ENCODE measurements at regions of chr22 and their contacts with region 1.

Region 1: DNA sequence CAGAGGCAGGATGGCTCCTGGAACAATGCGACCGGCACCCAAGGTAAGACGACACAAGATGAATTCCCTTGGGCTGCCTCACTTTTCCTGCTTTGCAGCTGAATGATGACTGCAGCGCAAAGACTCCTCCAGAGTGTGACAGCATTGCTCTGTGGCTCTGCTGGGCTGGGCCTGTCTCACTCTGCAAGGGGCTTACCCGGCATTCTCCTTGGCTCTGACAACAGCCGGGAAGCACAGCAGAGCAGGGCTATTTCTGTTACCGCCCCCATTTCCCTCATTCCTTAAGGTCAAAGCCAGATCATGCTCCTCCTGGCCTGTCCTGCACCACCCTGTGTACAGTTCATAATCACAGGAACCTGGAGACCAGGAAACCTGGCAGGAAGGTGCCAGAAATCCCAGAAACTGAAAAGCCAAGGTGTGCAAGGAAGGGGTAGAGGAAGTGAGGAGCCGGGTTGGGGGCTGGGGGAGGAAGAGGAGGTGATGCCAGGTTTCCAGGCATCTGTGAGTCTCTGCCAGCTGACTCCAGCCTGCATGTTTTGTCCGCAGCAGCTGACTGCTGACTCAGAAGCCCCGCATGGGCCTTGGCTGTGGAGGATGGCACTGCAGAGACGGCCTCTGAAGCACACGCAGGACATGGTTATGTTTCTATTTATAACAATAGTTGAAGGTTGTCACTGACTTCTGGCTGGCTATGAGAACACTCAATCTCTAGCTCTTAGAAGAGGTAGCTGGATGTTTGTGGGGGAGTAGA is 113.6 kb downstream of the MICAL3 start:
- DNase-seq: peak; percentile 69 to 83
- ATAC-seq: peak; percentile 87 to 96 (median 94)
- H3K4me3 ChIP-seq: peak overlapping the region in 2 of 10 donors; percentile 2 to 8
- H3K27ac ChIP-seq: peak overlapping the region; percentile 79 to 96 (median 85)
- H3K4me1 ChIP-seq: peaks cover 17 to 99% (median 69%) of the 10 kb centered on the region in 9 donors
- H3K27me3 ChIP-seq: no peaks in the 10 kb centered on the region
- CTCF ChIP-seq: peak in 8 of 9 donors; percentile 24 to 82 (median 53)

Region 2: GRCh38 chr22:17980638-17981051 is 69.9 kb after region 1 on chr22:
- intact Hi-C with region 1: loop called in 1 of 10 experiments (anchors 10 kb)
- DNase-seq: peak in 1 of 2 donors; percentile 33
- ATAC-seq: peak in 7 of 8 donors; percentile 21 to 74 (median 56)
- H3K4me3 ChIP-seq: peak overlapping the region in 5 of 10 donors; percentile 7 to 25 (median 12)
- H3K27ac ChIP-seq: peak overlapping the region in 7 of 10 donors; percentile 7 to 65 (median 36)
- H3K4me1 ChIP-seq: peaks cover 11 to 58% (median 25%) of the 10 kb centered on the region in 9 donors
- H3K27me3 ChIP-seq: no peaks in the 10 kb centered on the region
- CTCF ChIP-seq: no peak

Region 3: DNA sequence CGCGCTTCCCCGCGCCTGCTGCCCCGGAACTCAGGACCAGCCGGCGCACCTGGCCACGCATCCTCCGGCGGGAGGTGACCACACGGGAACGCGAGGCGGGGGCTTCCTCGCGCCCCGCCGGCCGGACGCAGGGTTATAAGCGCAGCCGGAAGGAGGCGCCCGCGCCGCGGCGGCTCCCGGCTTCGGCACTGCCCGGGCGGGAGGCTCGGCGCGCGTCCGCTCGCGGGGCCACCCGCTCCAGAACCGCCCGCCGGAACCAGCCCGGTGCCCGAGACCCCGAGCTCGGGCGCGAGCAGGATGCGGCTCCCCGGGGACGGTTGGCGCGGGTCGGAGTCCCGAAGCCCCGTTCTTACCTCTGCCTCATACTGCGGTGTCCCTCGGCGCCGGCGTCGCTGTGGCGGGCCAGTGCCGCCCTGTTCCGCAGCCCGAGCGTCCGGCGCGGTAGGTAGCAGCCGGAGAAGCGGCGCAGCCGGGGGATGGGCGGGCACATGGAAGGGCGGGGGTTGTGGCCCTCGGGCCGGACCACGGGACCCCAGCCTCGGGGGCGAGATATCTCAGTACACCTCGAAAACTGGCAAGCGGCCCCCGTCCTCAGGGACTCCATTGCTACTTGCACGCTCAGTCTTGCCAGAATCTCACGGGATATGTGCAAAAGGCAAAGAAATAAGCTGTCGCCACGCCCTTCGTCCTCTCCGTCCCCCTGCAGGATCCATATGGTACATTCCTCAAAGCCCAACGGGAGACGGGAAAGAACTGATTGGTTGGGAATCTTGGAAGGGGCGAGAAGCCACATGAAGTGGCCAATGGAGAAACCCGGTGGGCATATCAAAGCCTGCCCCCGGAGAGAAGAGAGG is 90.5 kb after region 1 on chr22:
- intact Hi-C with region 1: loop called in 4 of 10 experiments (anchors 2 to 5 kb)
- DNase-seq: peak; percentile 90 to 94
- ATAC-seq: peak; percentile 96 to 98 (median 97)
- H3K4me3 ChIP-seq: peak overlapping the region; percentile 57 to 92 (median 76)
- H3K27ac ChIP-seq: peak overlapping the region; percentile 85 to 98 (median 91)
- H3K4me1 ChIP-seq: peaks cover 0 to 53% (median 25%) of the 10 kb centered on the region in 9 donors
- H3K27me3 ChIP-seq: peaks cover 0 to 12% (median 0%) of the 10 kb centered on the region in 7 donors
- CTCF ChIP-seq: peak in 8 of 9 donors; percentile 21 to 67 (median 52)